ENCODE measurements at regions of chr2 and their contacts with region 1.

Region 1: GRCh38 chr2:37570773-37571586 is 100.5 kb downstream of the CDC42EP3 start:
- DNase-seq: peak in 1 of 2 experiments; percentile 69
- H3K4me3 ChIP-seq: no peak overlapping the region
- H3K4me3 Mint-ChIP-seq: peak overlapping the region; percentile 35
- H3K27ac Mint-ChIP-seq: peak overlapping the region; percentile 92
- H3K4me1 ChIP-seq: peaks cover 42% of the 10 kb centered on the region
- H3K4me1 Mint-ChIP-seq: peaks cover 52% of the 10 kb centered on the region
- H3K27me3 ChIP-seq: no peaks in the 10 kb centered on the region
- H3K27me3 Mint-ChIP-seq: no peaks in the 10 kb centered on the region
- CTCF ChIP-seq: no peak

Region 2: GRCh38 chr2:37614061-37614738 is 43.2 kb after region 1 on chr2:
- CTCF ChIA-PET with region 1: no interaction called
- POLR2A ChIA-PET with region 1: no interaction called
- intact Hi-C with region 1: loop called (anchors 5 kb)
- DNase-seq: no peak
- H3K4me3 ChIP-seq: no peak overlapping the region
- H3K4me3 Mint-ChIP-seq: no peak overlapping the region
- H3K27ac Mint-ChIP-seq: peak overlapping the region; percentile 68
- H3K4me1 ChIP-seq: peaks cover 6% of the 10 kb centered on the region; the same call in 1 of the 2 replicates
- H3K4me1 Mint-ChIP-seq: peaks cover 8% of the 10 kb centered on the region
- H3K27me3 ChIP-seq: no peaks in the 10 kb centered on the region
- H3K27me3 Mint-ChIP-seq: no peaks in the 10 kb centered on the region
- CTCF ChIP-seq: no peak

Region 3: DNA sequence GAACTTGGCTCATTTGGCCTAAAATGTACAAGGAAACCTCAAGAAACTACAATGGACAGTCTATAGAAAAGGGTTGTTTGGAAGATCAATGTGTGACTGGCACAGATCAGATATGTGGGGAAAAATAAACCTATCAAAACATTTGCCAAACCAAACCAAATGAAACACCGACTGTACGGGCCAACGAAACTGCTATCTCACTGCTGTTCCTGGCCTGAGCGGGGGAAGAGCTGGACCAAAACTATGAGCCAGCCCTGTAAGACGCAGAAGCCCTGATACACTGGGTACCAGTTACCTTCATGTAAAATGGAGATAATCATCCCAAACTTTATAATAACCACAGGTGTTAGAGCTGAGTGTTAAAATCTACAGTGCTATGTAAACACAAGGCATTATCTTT is 88.7 kb after region 1 on chr2:
- CTCF ChIA-PET with region 1: no interaction called
- POLR2A ChIA-PET with region 1: no interaction called
- intact Hi-C with region 1: loop called (anchors 1 kb)
- DNase-seq: no peak
- H3K4me3 ChIP-seq: no peak overlapping the region
- H3K4me3 Mint-ChIP-seq: peak overlapping the region; percentile 47
- H3K27ac Mint-ChIP-seq: peak overlapping the region; percentile 35
- H3K4me1 ChIP-seq: peaks cover 66% of the 10 kb centered on the region
- H3K4me1 Mint-ChIP-seq: peaks cover 60% of the 10 kb centered on the region
- H3K27me3 ChIP-seq: no peaks in the 10 kb centered on the region
- H3K27me3 Mint-ChIP-seq: no peaks in the 10 kb centered on the region
- CTCF ChIP-seq: no peak

Region 4: DNA sequence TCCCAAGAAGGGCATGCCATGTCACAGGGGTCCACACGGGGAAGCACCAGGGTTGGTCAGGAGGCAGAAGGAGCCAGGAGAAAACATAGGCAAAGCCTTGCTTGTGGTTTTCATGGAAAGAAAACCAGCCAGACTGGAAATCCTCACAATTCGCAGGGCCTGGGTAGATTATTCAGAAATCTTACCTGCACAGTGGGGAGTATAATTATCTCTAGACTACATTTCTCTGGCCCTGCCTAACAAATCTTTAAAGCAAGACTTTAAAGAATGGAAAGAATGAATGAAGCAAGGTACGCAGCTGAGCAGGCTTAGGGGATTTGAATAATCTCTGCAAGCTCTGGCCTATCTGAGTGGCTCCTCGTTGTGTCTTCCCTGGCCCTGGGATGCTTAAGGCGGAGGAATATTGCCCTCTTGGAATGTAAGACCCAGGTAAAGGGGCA is 167.4 kb after region 1 on chr2:
- CTCF ChIA-PET with region 1: no interaction called
- POLR2A ChIA-PET with region 1: no interaction called
- intact Hi-C with region 1: loop called (anchors 1 kb)
- DNase-seq: peak; percentile 84 to 90
- H3K4me3 ChIP-seq: no peak overlapping the region
- H3K4me3 Mint-ChIP-seq: peak overlapping the region; percentile 52
- H3K27ac Mint-ChIP-seq: peak overlapping the region; percentile 95
- H3K4me1 ChIP-seq: peaks cover 25% of the 10 kb centered on the region
- H3K4me1 Mint-ChIP-seq: peaks cover 50% of the 10 kb centered on the region
- H3K27me3 ChIP-seq: no peaks in the 10 kb centered on the region
- H3K27me3 Mint-ChIP-seq: no peaks in the 10 kb centered on the region
- CTCF ChIP-seq: no peak